ENCODE measurements at regions of chr18 and their contacts with region 1.

Region 1: GRCh38 chr18:74551936-74552555 is 17.7 kb downstream of the CNDP1 start:
- H3K4me3 ChIP-seq: no peak overlapping the region
- H3K27ac ChIP-seq: no peak overlapping the region
- H3K4me1 ChIP-seq: no peaks in the 10 kb centered on the region
- CTCF ChIP-seq: peak; percentile 61

Region 2: GRCh38 chr18:74196220-74197119 is 355.6 kb before region 1 on chr18:
- CTCF ChIA-PET with region 1: interaction called, 16 read pairs
- POLR2A ChIA-PET with region 1: no interaction called
- H3K4me3 ChIP-seq: peak overlapping the region; percentile 24
- H3K27ac ChIP-seq: no peak overlapping the region
- H3K4me1 ChIP-seq: no peaks in the 10 kb centered on the region
- CTCF ChIP-seq: peak; percentile 72

Region 3: DNA sequence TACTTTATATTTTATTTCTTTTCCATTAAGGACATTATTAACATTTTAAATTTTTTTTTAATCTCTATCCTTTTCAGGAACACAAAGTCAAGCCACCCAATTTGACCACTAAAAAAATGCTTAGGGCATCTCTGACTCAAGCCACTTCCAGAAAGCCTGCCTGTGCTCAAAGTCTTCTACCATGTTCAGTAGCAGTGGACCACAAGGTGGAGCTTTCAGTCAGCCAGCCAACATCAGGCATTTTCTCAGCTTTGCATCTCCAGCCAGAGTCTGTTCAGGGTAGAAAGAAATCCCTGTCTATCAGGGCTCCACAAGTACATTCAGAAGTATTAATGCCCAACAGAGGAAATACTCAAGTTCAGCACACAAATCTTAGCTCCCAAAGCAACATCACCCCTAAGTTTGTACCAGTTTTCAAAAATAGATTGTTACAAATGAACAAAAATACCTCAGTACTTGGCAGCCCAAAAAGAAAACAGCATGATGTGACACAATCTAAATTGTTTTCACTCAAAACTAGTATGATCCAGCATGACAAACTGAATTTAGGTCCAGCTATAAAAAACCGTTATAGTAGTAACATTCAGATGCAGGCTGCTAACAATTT is 198.8 kb before region 1 on chr18:
- CTCF ChIA-PET with region 1: interaction called, 42 read pairs
- POLR2A ChIA-PET with region 1: interaction called, 3 read pairs
- H3K4me3 ChIP-seq: no peak overlapping the region
- H3K27ac ChIP-seq: no peak overlapping the region
- H3K4me1 ChIP-seq: no peaks in the 10 kb centered on the region
- CTCF ChIP-seq: peak; percentile 56

Region 4: GRCh38 chr18:74563999-74564398 is 12.0 kb after region 1 on chr18:
- CTCF ChIA-PET with region 1: interaction called, 13 read pairs
- POLR2A ChIA-PET with region 1: no interaction called
- H3K4me3 ChIP-seq: no peak overlapping the region
- H3K27ac ChIP-seq: no peak overlapping the region
- H3K4me1 ChIP-seq: no peaks in the 10 kb centered on the region
- CTCF ChIP-seq: no peak

Region 5: DNA sequence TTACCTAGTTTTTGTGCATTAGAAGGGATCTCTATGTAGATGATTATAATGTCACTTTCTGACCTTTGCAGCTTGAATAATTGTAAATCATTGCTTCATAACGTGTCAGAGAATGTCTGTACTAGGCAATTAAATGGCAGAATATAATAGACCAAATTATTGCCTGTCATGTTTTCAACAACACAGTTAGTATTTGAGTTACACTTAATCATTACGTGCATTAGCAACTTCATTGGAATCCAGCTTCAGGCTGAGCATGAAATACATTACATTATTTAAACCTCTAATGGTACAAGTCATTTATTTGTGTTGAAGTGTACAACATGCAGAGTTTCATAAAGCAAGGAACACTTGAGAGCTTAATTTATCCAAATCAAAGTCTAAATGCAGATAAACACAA is 93.6 kb after region 1 on chr18:
- CTCF ChIA-PET with region 1: no interaction called
- POLR2A ChIA-PET with region 1: no interaction called
- H3K4me3 ChIP-seq: no peak overlapping the region
- H3K27ac ChIP-seq: no peak overlapping the region
- H3K4me1 ChIP-seq: no peaks in the 10 kb centered on the region
- CTCF ChIP-seq: no peak

Region 6: DNA sequence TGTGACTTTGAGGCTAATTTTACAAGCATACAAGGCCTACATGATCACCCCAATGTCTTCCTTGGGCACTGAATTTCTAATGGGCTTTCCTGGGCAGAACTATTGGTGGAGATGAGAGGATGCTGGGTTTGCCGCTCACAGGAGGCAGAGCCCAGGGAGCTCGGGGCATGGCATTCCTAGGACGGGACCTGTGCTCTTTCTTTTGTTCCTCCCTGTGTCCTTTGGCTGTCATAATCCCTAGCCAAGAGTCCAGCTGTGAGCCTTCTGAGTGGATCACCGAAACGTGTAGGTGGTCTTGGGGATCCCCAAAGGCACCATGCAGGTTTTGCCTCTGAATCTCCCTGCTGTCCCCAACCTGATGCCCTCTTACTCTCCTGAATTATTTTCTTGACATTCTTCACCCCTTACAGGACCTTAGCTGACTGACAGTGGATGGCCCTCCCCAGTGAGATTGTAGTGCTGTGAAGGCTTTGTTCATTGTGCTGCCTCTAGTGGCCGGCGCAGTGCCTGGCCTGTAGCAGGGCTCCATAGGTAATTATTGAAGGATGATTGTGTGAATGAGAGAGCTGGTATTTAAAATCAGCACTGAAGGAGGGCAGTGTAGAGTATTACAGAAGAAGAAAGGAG is 267.5 kb after region 1 on chr18:
- CTCF ChIA-PET with region 1: no interaction called
- POLR2A ChIA-PET with region 1: no interaction called
- H3K4me3 ChIP-seq: no peak overlapping the region
- H3K27ac ChIP-seq: no peak overlapping the region
- H3K4me1 ChIP-seq: no peaks in the 10 kb centered on the region
- CTCF ChIP-seq: no peak